ENCODE measurements at regions of chr1 and their contacts with region 1.

Region 1: GRCh38 chr1:218330043-218330623 is 15.0 kb upstream of the TGFB2 start:
- DNase-seq: peak in 2 of 9 experiments; percentile 46 to 61
- ATAC-seq: peak; percentile 62
- H3K4me3 ChIP-seq: no peak overlapping the region
- H3K4me3 Mint-ChIP-seq: no peak overlapping the region
- H3K27ac ChIP-seq: no peak overlapping the region
- H3K27ac Mint-ChIP-seq: no peak overlapping the region
- H3K4me1 ChIP-seq: no peaks in the 10 kb centered on the region
- H3K4me1 Mint-ChIP-seq: no peaks in the 10 kb centered on the region
- H3K27me3 ChIP-seq: no peaks in the 10 kb centered on the region
- H3K27me3 Mint-ChIP-seq: no peaks in the 10 kb centered on the region
- CTCF ChIP-seq: peak; percentile 86

Region 2: DNA sequence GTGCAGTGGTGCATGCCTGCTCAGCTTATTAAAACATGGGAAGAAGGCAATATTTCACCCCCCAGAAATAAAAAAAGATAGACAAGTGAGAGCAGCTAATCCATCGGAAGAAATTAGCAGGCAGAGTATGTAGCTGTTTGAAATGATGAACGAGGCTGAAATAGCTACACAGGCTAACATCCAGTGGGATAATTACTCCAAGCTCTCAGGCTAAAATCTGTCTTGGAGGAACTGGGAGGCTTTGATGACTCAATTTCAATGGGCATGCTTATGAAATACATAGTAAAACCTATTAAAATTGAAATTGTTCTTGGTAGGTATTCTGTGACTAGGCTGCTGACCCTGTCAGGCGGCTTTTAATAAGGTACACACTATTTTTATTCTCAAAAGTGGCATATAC is 129.2 kb before region 1 on chr1:
- CTCF ChIA-PET with region 1: no interaction called
- POLR2A ChIA-PET with region 1: no interaction called
- intact Hi-C with region 1: no loop called
- DNase-seq: no peak
- ATAC-seq: no peak
- H3K4me3 ChIP-seq: no peak overlapping the region
- H3K4me3 Mint-ChIP-seq: no peak overlapping the region
- H3K27ac ChIP-seq: no peak overlapping the region
- H3K27ac Mint-ChIP-seq: no peak overlapping the region
- H3K4me1 ChIP-seq: no peaks in the 10 kb centered on the region
- H3K4me1 Mint-ChIP-seq: no peaks in the 10 kb centered on the region
- H3K27me3 ChIP-seq: no peaks in the 10 kb centered on the region
- H3K27me3 Mint-ChIP-seq: no peaks in the 10 kb centered on the region
- CTCF ChIP-seq: no peak

Region 3: GRCh38 chr1:218250492-218250891 is 79.6 kb before region 1 on chr1:
- CTCF ChIA-PET with region 1: no interaction called
- POLR2A ChIA-PET with region 1: no interaction called
- intact Hi-C with region 1: no loop called
- DNase-seq: no peak
- ATAC-seq: no peak
- H3K4me3 ChIP-seq: no peak overlapping the region
- H3K4me3 Mint-ChIP-seq: no peak overlapping the region
- H3K27ac ChIP-seq: no peak overlapping the region
- H3K27ac Mint-ChIP-seq: no peak overlapping the region
- H3K4me1 ChIP-seq: no peaks in the 10 kb centered on the region
- H3K4me1 Mint-ChIP-seq: no peaks in the 10 kb centered on the region
- H3K27me3 ChIP-seq: no peaks in the 10 kb centered on the region
- H3K27me3 Mint-ChIP-seq: peaks cover 30% of the 10 kb centered on the region
- CTCF ChIP-seq: no peak

Region 4: GRCh38 chr1:218521375-218522169 is 191.4 kb after region 1 on chr1:
- CTCF ChIA-PET with region 1: interaction called, 5 read pairs
- POLR2A ChIA-PET with region 1: no interaction called
- intact Hi-C with region 1: loop called in 1 of 2 experiments (anchors 5 kb)
- DNase-seq: peak in 5 of 9 experiments; percentile 9 to 27 (median 19)
- ATAC-seq: no peak
- H3K4me3 ChIP-seq: no peak overlapping the region
- H3K4me3 Mint-ChIP-seq: no peak overlapping the region
- H3K27ac ChIP-seq: no peak overlapping the region
- H3K27ac Mint-ChIP-seq: no peak overlapping the region
- H3K4me1 ChIP-seq: no peaks in the 10 kb centered on the region
- H3K4me1 Mint-ChIP-seq: no peaks in the 10 kb centered on the region
- H3K27me3 ChIP-seq: no peaks in the 10 kb centered on the region
- H3K27me3 Mint-ChIP-seq: peaks cover 3% of the 10 kb centered on the region
- CTCF ChIP-seq: peak; percentile 32

Region 5: DNA sequence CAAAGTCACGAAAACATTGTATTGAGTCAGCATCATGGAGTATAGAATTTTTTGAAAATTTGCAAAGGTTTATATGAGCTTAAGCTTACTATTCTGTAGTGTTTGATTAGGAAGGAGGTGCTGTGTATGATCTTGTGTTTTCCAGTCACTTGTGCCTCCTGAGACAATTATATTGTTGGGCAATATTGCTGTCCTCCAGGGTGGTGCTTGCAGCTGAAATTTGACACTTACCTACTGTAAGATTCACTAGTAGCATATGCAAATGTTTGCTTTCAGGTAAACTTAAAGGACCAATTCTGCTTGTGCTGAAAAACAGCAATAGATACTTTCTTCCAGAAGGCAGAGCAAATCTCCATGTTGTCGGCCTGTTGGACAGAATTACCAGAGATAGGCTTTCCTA is 283.0 kb after region 1 on chr1:
- CTCF ChIA-PET with region 1: no interaction called
- POLR2A ChIA-PET with region 1: no interaction called
- intact Hi-C with region 1: no loop called
- DNase-seq: no peak
- ATAC-seq: no peak
- H3K4me3 ChIP-seq: no peak overlapping the region
- H3K4me3 Mint-ChIP-seq: no peak overlapping the region
- H3K27ac ChIP-seq: no peak overlapping the region
- H3K27ac Mint-ChIP-seq: no peak overlapping the region
- H3K4me1 ChIP-seq: no peaks in the 10 kb centered on the region
- H3K4me1 Mint-ChIP-seq: no peaks in the 10 kb centered on the region
- H3K27me3 ChIP-seq: no peaks in the 10 kb centered on the region
- H3K27me3 Mint-ChIP-seq: no peaks in the 10 kb centered on the region
- CTCF ChIP-seq: no peak

Region 6: GRCh38 chr1:219416594-219417238 is 1086.6 kb after region 1 on chr1:
- CTCF ChIA-PET with region 1: interaction called, 3 read pairs
- POLR2A ChIA-PET with region 1: no interaction called
- intact Hi-C with region 1: loop called in 1 of 2 experiments (anchors 1 kb)
- DNase-seq: peak in 8 of 9 experiments; percentile 13 to 64 (median 46)
- ATAC-seq: no peak
- H3K4me3 ChIP-seq: no peak overlapping the region
- H3K4me3 Mint-ChIP-seq: no peak overlapping the region
- H3K27ac ChIP-seq: no peak overlapping the region
- H3K27ac Mint-ChIP-seq: no peak overlapping the region
- H3K4me1 ChIP-seq: no peaks in the 10 kb centered on the region
- H3K4me1 Mint-ChIP-seq: no peaks in the 10 kb centered on the region
- H3K27me3 ChIP-seq: no peaks in the 10 kb centered on the region
- H3K27me3 Mint-ChIP-seq: no peaks in the 10 kb centered on the region
- CTCF ChIP-seq: peak; percentile 47

Region 7: GRCh38 chr1:219812491-219813203 is 1482.5 kb after region 1 on chr1:
- CTCF ChIA-PET with region 1: no interaction called
- POLR2A ChIA-PET with region 1: no interaction called
- intact Hi-C with region 1: loop called in 1 of 2 experiments (anchors 5 kb)
- DNase-seq: peak in 1 of 9 experiments; percentile 6
- ATAC-seq: no peak
- H3K4me3 ChIP-seq: no peak overlapping the region
- H3K4me3 Mint-ChIP-seq: no peak overlapping the region
- H3K27ac ChIP-seq: no peak overlapping the region
- H3K27ac Mint-ChIP-seq: no peak overlapping the region
- H3K4me1 ChIP-seq: no peaks in the 10 kb centered on the region
- H3K4me1 Mint-ChIP-seq: no peaks in the 10 kb centered on the region
- H3K27me3 ChIP-seq: no peaks in the 10 kb centered on the region
- H3K27me3 Mint-ChIP-seq: peaks cover 18% of the 10 kb centered on the region
- CTCF ChIP-seq: peak; percentile 11

Measured in CD8-positive, alpha-beta T cell (primary cell).